ENCODE measurements at regions of chr9 and their contacts with region 1.

Region 1: GRCh38 chr9:20319641-20320337 is 302.5 kb downstream of the MLLT3 start:
- DNase-seq: peak; percentile 48
- H3K4me3 Mint-ChIP-seq: no peak overlapping the region
- H3K27ac Mint-ChIP-seq: peak overlapping the region; percentile 63
- H3K4me1 Mint-ChIP-seq: peaks cover 80% of the 10 kb centered on the region
- H3K27me3 Mint-ChIP-seq: no peaks in the 10 kb centered on the region

Region 2: GRCh38 chr9:20043035-20043434 is 276.8 kb before region 1 on chr9:
- CTCF ChIA-PET with region 1: no interaction called
- POLR2A ChIA-PET with region 1: no interaction called
- intact Hi-C with region 1: loop called (anchors 2 kb)
- DNase-seq: peak; percentile 23
- H3K4me3 Mint-ChIP-seq: peak overlapping the region; percentile 53
- H3K27ac Mint-ChIP-seq: peak overlapping the region; percentile 70
- H3K4me1 Mint-ChIP-seq: peaks cover 30% of the 10 kb centered on the region
- H3K27me3 Mint-ChIP-seq: no peaks in the 10 kb centered on the region

Region 3: DNA sequence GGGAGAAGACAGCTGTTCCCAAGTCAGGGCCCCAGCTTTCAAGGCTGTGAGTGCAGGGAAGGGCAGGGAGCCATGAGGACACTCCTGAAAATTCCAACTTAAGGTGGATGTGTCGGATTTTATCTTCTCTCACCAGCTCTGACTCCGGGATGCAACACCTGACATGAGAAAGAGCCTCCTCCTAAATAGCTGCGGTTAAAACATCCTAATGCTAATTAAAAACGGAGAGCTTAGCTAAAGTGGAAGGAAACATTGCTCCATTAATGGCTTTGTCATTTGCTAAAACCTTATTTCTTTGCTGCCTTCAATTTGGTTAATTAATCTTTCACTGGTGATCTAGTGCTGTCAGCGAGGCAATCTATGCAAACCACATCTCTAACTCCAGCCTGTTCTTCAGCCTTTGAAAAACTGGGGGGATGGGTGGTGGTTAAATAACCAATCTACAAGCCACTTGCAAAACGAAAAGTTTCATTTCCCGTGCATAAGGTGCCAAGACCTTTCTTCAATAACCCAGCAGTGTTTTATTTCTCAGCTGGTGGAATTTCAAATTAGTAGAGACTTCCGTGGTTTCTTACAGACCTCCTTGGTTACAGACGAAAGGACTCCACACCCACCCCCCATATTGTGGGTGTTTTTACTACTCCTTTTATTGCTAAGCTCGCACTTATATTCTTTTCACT is 77.1 kb before region 1 on chr9:
- CTCF ChIA-PET with region 1: no interaction called
- POLR2A ChIA-PET with region 1: interaction called, 4 read pairs
- intact Hi-C with region 1: loop called (anchors 1 kb)
- DNase-seq: peak; percentile 30
- H3K4me3 Mint-ChIP-seq: peak overlapping the region; percentile 18
- H3K27ac Mint-ChIP-seq: no peak overlapping the region
- H3K4me1 Mint-ChIP-seq: peaks cover 46% of the 10 kb centered on the region
- H3K27me3 Mint-ChIP-seq: peaks cover 7% of the 10 kb centered on the region

Region 4: DNA sequence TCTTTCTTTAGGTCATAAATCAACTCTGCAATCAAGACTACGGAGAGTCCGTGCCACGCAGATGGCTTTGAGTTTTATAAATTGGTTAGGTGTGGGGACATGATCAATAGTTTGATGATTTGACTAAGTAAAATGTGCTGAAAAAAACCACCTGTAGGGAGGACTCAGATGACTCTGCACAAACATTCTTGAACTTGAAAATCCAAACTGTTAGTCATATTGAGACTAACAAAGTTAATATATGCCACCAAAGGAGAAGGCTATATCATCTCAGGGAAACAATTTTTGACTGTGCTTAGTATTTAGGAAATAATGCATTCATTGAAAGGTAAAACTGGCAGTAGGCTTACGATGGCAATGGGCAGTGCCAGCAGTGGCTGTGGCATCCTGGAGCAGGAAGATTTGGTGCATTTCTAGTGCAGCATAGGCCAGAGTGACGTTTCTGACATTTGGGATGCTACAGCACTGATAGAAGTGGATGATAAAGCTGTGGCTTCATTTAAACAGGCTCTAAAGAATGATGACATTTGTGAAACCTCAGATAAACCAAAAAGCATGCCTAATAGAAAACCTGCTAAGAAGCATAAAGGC is 11.4 kb after region 1 on chr9:
- CTCF ChIA-PET with region 1: interaction called, 3 read pairs
- POLR2A ChIA-PET with region 1: interaction called, 4 read pairs
- intact Hi-C with region 1: loop called (anchors 1 kb)
- DNase-seq: peak; percentile 37
- H3K4me3 Mint-ChIP-seq: no peak overlapping the region
- H3K27ac Mint-ChIP-seq: peak overlapping the region; percentile 63
- H3K4me1 Mint-ChIP-seq: peaks cover 20% of the 10 kb centered on the region
- H3K27me3 Mint-ChIP-seq: no peaks in the 10 kb centered on the region

Region 5: DNA sequence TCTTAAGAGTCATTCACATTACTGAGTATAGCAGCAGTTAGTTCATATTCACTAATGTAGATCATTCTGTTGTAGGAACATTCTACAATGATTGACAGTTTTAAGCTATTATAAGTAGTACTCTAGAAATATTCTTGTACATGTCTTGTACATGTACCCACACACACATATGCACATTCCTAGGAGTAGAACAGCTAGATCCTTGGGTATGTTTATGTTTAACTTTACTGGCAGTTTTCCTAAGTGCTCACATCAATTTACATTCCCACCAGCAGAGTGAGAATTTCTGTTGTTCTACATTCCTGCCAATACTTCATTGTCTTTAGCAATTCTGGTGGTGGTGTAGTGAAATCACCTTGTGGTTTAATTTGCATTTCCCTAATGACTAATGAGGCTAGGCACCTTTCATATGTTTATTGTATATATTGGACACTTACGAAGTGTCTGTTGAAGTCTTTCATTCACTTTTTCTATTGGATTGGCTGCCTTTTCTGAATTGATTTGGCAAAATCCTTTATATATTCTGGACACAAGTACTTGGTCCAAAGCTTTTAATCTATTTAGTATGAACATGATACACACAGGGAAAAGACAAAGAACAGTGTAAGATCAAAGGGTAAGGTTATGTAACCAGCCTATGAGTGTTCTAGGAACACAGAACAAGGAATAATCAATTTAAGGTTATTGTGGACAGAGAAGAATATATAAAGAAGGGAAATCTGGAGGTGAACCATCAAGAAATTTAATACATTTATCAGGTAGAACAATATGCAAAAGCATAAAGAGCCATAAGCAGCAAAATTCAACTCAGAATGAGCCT is 206.9 kb after region 1 on chr9:
- CTCF ChIA-PET with region 1: no interaction called
- POLR2A ChIA-PET with region 1: no interaction called
- intact Hi-C with region 1: no loop called
- DNase-seq: no peak
- H3K4me3 Mint-ChIP-seq: no peak overlapping the region
- H3K27ac Mint-ChIP-seq: no peak overlapping the region
- H3K4me1 Mint-ChIP-seq: peaks cover 76% of the 10 kb centered on the region
- H3K27me3 Mint-ChIP-seq: no peaks in the 10 kb centered on the region